ENCODE measurements at regions of chr7 and their contacts with region 1.

Region 1: DNA sequence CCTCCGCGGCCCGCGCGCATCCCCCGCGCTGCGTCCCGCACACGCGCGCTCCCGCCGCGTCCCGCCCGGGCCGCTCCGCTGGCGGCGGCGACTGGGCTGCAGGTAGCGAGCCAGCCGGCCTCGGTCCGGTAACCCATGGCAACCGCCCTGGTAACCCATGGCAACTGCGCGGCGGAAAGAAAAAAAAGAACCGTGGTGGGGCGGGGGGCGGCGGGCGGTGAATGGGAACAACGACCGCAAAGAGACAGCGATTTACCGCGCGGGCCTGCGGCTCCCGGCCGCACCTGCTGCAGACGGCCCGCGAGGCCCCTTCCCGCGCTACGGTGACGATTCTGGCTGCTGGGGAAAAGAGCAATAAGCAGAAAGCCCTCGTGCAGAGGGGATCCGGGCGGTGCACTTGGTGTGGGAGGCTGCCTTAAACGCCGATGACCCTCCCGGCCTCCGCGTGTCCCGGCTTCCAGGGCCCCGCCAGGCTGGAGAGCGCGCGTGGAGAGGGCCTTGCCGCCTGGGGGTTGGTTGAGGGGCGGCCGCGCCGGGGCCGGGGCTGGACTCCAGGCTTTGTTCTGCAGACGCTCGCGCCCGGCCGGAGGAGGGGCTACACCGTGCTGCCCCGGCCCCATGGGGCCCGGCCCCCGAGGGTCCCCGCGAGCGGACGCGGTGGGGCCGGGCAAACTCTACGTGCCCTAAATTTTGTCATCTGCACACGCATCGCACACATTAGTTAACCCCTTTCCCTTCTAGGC is 84.7 kb downstream of the SNX10 start:
- DNase-seq: no peak
- H3K4me3 ChIP-seq: peak overlapping the region; percentile 21
- CTCF ChIP-seq: no peak
- POLR2A ChIP-seq: no peak

Region 2: DNA sequence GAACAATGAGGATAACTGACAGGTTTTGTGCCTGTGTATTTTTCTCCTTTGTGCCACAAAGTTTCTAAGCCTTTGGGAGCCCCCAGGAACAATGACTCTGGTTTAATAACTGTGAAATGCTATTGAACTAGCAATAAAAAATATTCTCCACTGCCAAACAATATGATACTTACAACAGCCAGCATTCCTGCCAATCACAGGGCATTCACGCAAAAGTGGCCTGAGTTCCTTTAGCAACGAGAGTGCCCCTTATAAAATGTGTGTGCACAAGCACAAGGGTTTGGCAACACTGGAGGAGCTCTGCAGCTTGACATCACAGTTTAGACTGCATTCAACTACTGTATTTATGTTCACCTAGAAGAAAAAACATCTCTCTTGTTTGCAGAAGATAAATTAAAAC is 637.2 kb before region 1 on chr7:
- intact Hi-C with region 1: no loop called
- DNase-seq: no peak
- H3K4me3 ChIP-seq: no peak overlapping the region
- CTCF ChIP-seq: no peak
- POLR2A ChIP-seq: no peak

Region 3: GRCh38 chr7:26507108-26507987 is 131.0 kb after region 1 on chr7:
- intact Hi-C with region 1: no loop called
- DNase-seq: no peak
- H3K4me3 ChIP-seq: no peak overlapping the region
- CTCF ChIP-seq: no peak
- POLR2A ChIP-seq: no peak

Region 4: DNA sequence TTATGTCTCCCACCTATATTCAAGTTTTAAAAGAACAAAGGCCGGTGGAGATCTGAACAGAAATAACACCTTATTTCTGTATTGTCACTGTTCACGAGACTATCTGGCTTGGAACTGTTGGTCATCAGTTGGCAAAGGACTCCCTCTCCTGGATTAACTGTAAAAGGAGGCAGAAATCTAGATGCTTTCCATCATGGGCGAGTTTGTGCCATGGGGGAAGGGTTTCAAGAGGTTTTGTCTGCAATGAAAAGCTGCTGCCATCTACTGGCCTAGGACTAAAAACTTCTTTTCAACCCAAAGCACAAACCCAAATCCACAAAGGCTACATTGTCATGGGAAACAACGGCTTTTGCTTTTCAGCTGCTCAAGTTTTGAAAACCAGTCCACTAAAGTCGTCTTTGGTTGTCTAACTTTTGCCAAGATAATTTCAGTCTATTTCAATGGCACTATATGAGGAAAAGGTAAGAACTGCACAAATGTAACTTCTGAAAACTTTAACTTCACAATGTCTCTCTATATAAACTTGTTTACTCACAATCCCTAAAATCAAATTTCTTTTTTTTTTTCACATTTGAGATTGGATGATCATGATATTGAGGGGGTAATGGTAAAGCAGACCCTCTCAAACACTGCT is 291.3 kb after region 1 on chr7:
- intact Hi-C with region 1: loop called (anchors 5 kb)
- DNase-seq: peak in 1 of 2 donors; percentile 72
- H3K4me3 ChIP-seq: no peak overlapping the region
- CTCF ChIP-seq: no peak
- POLR2A ChIP-seq: no peak

Region 5: DNA sequence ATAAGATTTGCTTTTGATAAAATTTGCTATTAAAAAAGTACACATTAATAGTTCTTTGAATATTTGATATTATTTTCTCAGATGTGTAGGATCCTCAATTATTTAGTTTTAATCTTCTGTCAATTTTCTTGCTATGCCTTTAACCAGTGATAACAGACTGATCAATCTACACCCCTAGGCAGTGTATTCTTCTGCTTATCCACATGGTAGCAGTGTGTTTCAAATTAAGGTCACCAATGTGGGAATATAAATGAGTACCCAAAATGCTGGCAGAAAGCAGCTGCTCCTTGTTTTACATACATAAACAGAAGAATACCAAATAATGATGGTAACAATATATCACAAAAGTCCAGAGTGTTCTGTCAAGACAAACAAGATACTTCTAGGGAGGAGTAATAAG is 401.0 kb after region 1 on chr7:
- intact Hi-C with region 1: no loop called
- DNase-seq: no peak
- H3K4me3 ChIP-seq: no peak overlapping the region
- CTCF ChIP-seq: no peak
- POLR2A ChIP-seq: no peak